WTC11 (cell line): ENCODE measurements at regions of chr18 and their contacts with region 1.

Region 1: GRCh38 chr18:48445540-48445939 is 36.4 kb upstream of the ZBTB7C start:
- DNase-seq: peak; percentile 90
- ATAC-seq: peak; percentile 75
- H3K4me3 Mint-ChIP-seq: no peak overlapping the region
- H3K27ac Mint-ChIP-seq: no peak overlapping the region
- H3K4me1 Mint-ChIP-seq: no peaks in the 10 kb centered on the region
- H3K27me3 Mint-ChIP-seq: no peaks in the 10 kb centered on the region
- CTCF ChIP-seq: peak; percentile 83

Region 2: GRCh38 chr18:48030616-48031480 is 414.7 kb before region 1 on chr18:
- CTCF ChIA-PET with region 1: interaction called, 15 read pairs
- POLR2A ChIA-PET with region 1: no interaction called
- DNase-seq: peak; percentile 59
- ATAC-seq: peak; percentile 91
- H3K4me3 Mint-ChIP-seq: no peak overlapping the region
- H3K27ac Mint-ChIP-seq: no peak overlapping the region
- H3K4me1 Mint-ChIP-seq: peaks cover 19% of the 10 kb centered on the region
- H3K27me3 Mint-ChIP-seq: no peaks in the 10 kb centered on the region
- CTCF ChIP-seq: peak; percentile 42; the same call in 1 of the 2 replicates

Region 3: DNA sequence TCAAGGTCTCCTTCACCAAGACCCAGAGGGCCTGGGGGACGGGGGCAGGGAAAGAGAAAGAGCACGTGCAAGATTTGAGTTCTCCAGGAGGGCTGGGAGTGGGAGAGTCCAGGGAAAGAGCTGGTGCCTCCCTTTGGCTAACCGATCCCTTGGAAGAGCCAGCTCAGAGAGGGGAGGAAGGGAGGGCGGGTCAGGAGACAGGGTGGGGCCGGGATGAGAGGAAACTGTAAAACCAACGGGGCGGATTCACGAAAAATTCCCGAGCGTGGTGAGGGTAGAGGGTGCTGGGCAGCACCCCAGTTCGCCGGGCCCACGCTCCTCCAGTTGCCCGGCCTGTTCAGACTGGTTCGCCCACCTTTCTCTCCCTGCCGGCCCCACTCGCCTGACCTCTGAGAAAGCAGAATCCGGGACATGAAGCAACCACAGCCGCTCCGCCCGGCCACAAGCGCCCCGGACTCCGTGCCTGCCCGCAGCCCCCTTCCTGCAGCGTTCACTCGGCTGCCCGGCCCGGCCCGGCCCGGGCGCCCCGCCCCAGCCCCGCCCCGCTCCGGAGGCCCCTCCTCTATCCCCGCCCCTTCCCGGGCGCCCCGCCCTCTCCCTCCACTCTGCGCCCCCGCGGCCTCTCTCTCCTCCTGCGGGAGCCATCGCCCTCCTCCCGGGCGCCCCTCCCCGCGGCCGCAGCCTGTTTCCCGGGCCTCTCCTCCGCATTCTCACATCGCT is 284.2 kb before region 1 on chr18:
- CTCF ChIA-PET with region 1: interaction called, 12 read pairs
- POLR2A ChIA-PET with region 1: no interaction called
- DNase-seq: peak; percentile 78
- ATAC-seq: peak; percentile 91
- H3K4me3 Mint-ChIP-seq: peak overlapping the region; percentile 68
- H3K27ac Mint-ChIP-seq: no peak overlapping the region
- H3K4me1 Mint-ChIP-seq: peaks cover 28% of the 10 kb centered on the region
- H3K27me3 Mint-ChIP-seq: peaks cover 71% of the 10 kb centered on the region
- CTCF ChIP-seq: no peak

Region 4: DNA sequence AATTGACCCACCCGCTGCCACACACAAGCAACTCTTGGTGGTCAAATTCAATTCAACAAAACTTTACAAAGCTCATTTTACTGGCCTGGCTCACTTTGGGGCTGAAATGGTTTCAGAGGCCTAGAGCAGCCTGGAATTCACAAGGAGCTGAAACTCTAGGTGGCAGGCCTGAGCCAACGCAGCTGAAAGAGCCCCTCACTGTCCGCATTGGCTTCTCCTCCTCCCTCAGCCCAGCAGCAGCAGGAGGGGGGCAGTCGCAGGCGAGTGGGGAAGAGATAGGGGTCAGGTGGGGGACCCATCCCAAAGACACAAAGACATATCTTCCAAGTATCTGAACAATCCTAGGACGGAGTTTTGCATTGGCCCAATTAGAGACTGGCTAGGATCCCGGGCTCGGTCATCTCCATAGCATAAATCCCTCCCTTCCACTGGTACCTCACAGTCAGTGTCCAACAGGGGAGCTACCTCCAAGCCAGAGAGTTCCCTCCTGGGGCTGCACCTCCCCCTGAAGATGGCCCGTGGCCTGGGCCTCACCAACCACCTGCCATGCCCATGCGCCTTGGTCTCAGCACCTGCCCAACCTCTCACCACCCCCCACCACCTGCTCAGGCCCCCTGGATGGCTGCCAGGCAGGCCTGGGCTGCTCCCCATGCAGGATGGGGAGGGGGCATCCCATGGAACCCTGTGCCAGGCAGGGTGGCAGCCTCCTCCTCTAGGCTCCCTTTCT is 149.8 kb before region 1 on chr18:
- CTCF ChIA-PET with region 1: interaction called, 55 read pairs
- POLR2A ChIA-PET with region 1: no interaction called
- DNase-seq: peak; percentile 66
- ATAC-seq: peak; percentile 90
- H3K4me3 Mint-ChIP-seq: no peak overlapping the region
- H3K27ac Mint-ChIP-seq: no peak overlapping the region
- H3K4me1 Mint-ChIP-seq: peaks cover 27% of the 10 kb centered on the region
- H3K27me3 Mint-ChIP-seq: no peaks in the 10 kb centered on the region
- CTCF ChIP-seq: no peak

Region 5: GRCh38 chr18:48399303-48400075 is 46.1 kb before region 1 on chr18:
- CTCF ChIA-PET with region 1: interaction called, 19 read pairs
- POLR2A ChIA-PET with region 1: no interaction called
- DNase-seq: no peak
- ATAC-seq: no peak
- H3K4me3 Mint-ChIP-seq: no peak overlapping the region
- H3K27ac Mint-ChIP-seq: no peak overlapping the region
- H3K4me1 Mint-ChIP-seq: peaks cover 8% of the 10 kb centered on the region
- H3K27me3 Mint-ChIP-seq: peaks cover 15% of the 10 kb centered on the region
- CTCF ChIP-seq: no peak

Region 6: DNA sequence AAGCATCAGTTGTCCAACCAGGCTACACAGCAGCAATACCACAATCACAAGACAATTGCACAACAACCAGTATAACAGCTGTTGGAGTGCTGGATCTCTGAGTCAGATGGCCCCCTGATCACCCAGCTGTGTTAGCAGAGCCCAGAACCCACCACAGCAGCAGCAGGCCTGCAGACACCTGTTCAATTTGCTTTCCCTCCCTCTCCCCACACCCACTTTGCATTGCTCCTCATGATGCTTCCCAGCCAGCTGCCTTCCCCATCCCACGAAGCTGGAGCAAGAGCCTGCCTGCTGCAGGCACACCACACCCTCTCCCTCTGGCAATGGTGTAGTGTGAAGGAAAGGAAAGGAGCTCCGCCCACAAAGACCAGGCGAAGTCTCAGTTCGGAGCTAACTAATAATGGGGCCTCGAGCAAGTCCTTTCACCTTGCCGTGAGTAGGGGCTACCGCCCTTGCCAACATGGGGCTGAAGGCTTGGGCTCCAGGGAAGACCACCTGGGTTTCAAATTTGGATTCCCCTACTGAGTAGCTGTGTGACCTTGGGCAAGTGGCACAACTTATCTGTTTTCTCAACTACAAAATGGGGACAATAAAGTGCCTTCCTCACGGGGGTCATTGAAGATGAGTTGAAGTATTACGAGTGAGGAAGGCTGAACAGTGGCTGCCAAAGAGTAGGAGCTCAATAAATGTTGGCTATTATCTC is 16.9 kb before region 1 on chr18:
- CTCF ChIA-PET with region 1: interaction called, 33 read pairs
- POLR2A ChIA-PET with region 1: no interaction called
- DNase-seq: no peak
- ATAC-seq: peak; percentile 83
- H3K4me3 Mint-ChIP-seq: no peak overlapping the region
- H3K27ac Mint-ChIP-seq: no peak overlapping the region
- H3K4me1 Mint-ChIP-seq: no peaks in the 10 kb centered on the region
- H3K27me3 Mint-ChIP-seq: peaks cover 39% of the 10 kb centered on the region
- CTCF ChIP-seq: no peak

Region 7: DNA sequence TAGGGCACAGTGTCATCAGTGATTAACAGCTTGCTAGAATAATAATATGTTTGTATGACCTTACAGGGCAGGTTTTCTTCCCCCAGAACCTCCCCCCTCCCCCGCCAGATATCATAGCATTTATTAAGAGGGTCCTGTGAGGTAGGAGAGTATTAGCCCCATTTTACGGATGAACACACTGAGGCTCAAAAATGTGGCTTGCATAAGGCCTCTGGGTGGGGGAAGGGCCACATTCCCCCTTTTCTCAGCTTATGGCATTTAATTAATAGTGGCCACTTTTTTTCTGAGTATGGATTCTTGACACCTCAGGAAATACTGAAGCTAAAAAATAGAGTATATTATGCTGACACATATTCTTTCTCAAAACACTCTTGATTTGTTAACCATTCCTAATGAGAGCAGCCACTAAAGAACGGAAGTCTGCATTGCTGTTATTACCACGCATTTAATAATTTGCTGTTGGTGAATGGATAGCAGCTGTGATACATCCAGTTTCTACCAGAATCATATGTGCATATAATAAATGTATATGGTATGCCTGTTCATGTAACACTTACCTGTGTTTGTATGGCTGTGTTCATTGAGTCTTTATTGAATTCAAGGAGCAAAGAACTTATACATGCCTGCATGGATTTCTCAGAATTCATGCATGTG is 96.3 kb after region 1 on chr18:
- CTCF ChIA-PET with region 1: no interaction called
- POLR2A ChIA-PET with region 1: no interaction called
- DNase-seq: no peak
- ATAC-seq: no peak
- H3K4me3 Mint-ChIP-seq: peak overlapping the region; percentile 81
- H3K27ac Mint-ChIP-seq: no peak overlapping the region
- H3K4me1 Mint-ChIP-seq: peaks cover 62% of the 10 kb centered on the region
- H3K27me3 Mint-ChIP-seq: peaks cover 30% of the 10 kb centered on the region
- CTCF ChIP-seq: no peak

Region 8: GRCh38 chr18:48676756-48677403 is 231.3 kb after region 1 on chr18:
- CTCF ChIA-PET with region 1: no interaction called
- POLR2A ChIA-PET with region 1: no interaction called
- DNase-seq: peak; percentile 89
- ATAC-seq: peak; percentile 69
- H3K4me3 Mint-ChIP-seq: no peak overlapping the region
- H3K27ac Mint-ChIP-seq: no peak overlapping the region
- H3K4me1 Mint-ChIP-seq: no peaks in the 10 kb centered on the region
- H3K27me3 Mint-ChIP-seq: no peaks in the 10 kb centered on the region
- CTCF ChIP-seq: peak; percentile 68